ENCODE measurements at regions of chr4 and their contacts with region 1.

Region 1: DNA sequence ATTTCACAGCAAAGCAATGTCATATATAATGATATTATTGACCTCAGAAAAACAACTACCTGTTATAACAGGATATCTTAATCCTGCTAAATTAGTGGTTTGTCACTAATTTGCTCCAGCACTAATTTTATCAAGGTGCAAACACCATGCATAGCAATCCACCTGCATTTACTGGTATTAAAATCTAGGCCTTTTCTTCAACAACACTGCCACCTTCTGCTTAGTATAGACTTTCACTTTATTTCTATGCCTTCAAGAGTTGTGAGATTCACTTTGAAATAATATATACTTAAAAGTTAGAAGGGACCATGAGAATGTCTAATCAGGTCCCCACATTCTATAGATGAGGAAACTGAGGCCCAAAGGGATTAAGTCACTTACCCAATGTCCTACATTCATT is 82.1 kb upstream of the IQCM start:
- DNase-seq: no peak
- H3K4me3 ChIP-seq: no peak overlapping the region
- H3K27ac ChIP-seq: no peak overlapping the region
- H3K27me3 ChIP-seq: no peaks in the 10 kb centered on the region
- CTCF ChIP-seq: peak; percentile 55

Region 2: DNA sequence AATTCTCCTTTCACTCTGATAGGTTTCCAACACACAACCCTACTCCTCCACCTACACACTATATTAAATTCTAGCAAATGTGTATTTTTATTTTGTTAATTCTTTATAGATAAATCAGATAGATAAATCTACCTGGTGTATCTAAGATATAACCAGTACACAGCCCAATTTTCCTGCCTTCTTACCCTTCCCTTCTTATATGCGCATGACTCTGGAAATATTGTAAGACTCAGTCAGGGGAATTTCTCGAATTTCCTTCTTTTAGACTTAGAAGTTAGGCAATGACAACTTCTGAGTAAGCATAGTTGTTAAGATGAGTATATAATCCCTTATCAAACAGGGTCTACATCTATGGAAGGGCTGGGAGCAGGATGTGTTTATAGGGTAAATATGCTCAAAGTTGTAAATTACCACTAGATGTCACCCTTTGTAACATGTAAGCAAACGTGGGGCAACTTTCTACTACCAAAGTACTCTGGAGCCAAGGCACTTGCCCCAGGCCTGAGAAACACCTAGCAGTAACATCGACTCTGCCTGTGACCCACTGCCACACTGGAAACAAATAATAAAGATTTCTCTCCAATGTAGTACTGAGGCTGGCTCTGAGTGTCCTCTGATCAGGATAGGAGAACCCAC is 526.9 kb before region 1 on chr4:
- CTCF ChIA-PET with region 1: interaction called, 69 read pairs
- POLR2A ChIA-PET with region 1: no interaction called
- DNase-seq: peak; percentile 23
- H3K4me3 ChIP-seq: no peak overlapping the region
- H3K27ac ChIP-seq: no peak overlapping the region
- H3K27me3 ChIP-seq: no peaks in the 10 kb centered on the region
- CTCF ChIP-seq: peak; percentile 62

Region 3: GRCh38 chr4:149885896-149886295 is 11.9 kb before region 1 on chr4:
- CTCF ChIA-PET with region 1: interaction called, 16 read pairs
- POLR2A ChIA-PET with region 1: no interaction called
- DNase-seq: peak; percentile 38
- H3K4me3 ChIP-seq: no peak overlapping the region
- H3K27ac ChIP-seq: no peak overlapping the region
- H3K27me3 ChIP-seq: no peaks in the 10 kb centered on the region
- CTCF ChIP-seq: no peak

Region 4: GRCh38 chr4:150217192-150217591 is 319.4 kb after region 1 on chr4:
- CTCF ChIA-PET with region 1: no interaction called
- POLR2A ChIA-PET with region 1: no interaction called
- DNase-seq: no peak
- H3K4me3 ChIP-seq: no peak overlapping the region
- H3K27ac ChIP-seq: no peak overlapping the region
- H3K27me3 ChIP-seq: no peaks in the 10 kb centered on the region
- CTCF ChIP-seq: peak; percentile 54

Measured in AG04450 (cell line).